ENCODE measurements at regions of chr7 and their contacts with region 1.

Region 1: DNA sequence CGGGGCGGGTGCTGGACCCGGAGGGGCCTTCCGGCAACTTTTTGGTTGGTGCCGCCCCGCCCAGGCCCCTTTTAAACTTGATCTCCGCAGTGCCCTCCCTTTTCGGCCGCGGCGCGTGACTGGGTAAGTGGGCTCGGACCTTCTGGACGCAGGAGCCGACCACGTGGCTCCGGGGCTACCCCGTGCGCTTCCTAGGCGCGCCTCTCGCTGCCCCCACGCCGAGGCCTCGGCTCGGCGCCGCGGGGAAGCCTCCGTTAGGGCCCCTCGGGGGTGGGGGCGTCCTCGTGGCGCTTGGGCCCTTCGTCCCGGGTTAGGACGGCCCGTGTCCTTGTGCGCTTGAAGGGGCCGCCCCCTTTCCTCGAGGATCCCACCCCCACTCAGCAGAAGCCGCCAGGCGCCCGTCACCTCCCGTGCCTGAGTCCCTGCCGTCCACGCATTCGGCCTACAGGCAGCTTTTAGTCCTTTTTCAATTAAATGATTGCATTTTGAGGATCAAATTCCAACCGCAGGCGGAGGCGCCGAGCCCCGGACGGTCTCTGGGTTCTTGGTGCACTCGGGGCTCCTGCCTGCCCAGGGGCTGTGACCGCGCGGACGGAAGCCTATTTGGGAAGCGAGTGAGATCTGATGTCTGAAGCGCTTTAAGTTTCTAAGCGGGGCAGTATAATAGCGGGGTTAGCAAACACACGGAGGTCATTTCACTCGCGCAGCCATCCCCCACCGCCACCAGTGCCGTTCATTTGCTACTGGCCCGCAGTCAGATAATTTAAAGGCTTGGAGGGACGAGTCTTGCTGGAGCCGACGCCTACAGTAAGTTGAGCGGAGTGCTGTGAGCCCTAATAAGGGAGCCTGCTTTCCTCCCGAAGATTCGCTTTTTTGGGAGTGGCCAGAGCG is 31.8 kb upstream of the TOMM7 start:
- DNase-seq: peak; percentile 89
- ATAC-seq: peak; percentile 74
- H3K4me3 Mint-ChIP-seq: peak overlapping the region; percentile 92
- H3K27ac Mint-ChIP-seq: peak overlapping the region; percentile 92
- H3K4me1 Mint-ChIP-seq: peaks cover 34% of the 10 kb centered on the region
- H3K27me3 Mint-ChIP-seq: peaks cover 2% of the 10 kb centered on the region

Region 2: GRCh38 chr7:22822486-22823141 is 31.8 kb before region 1 on chr7 and contains the start of gene TOMM7:
- CTCF ChIA-PET with region 1: interaction called, 4 read pairs
- POLR2A ChIA-PET with region 1: no interaction called
- intact Hi-C with region 1: loop called (anchors 1 to 2 kb)
- DNase-seq: peak; percentile 92
- ATAC-seq: peak; percentile 81
- H3K4me3 Mint-ChIP-seq: peak within 1 kb of the TSS; percentile 98
- H3K27ac Mint-ChIP-seq: peak within 1 kb of the TSS; percentile 93
- H3K4me1 Mint-ChIP-seq: peaks cover 35% of the 10 kb centered on the region
- H3K27me3 Mint-ChIP-seq: peaks cover 6% of the 10 kb centered on the region
- total RNA-seq, gene TOMM7: 73.7 to 254 TPM

Region 3: DNA sequence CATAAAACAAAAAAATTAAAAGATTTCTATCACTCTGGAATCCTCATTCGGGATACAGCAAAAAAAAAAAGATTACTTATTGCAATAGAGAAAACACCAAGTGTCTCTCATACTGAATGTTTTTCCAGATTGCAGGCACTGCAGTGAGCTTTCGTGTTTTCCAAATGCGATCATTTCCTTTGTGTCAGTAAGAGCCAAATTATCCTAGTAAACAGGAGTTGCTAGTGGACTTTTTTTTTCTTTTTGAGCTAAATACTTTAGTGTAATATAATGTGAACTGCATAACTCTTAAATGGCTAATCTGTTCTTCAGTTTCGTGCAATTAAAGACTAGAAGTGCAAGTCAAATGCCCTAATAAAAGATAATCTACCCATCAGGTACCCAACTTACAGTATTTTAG is 12.6 kb after region 1 on chr7:
- CTCF ChIA-PET with region 1: interaction called, 10 read pairs
- POLR2A ChIA-PET with region 1: no interaction called
- intact Hi-C with region 1: no loop called
- DNase-seq: no peak
- ATAC-seq: no peak
- H3K4me3 Mint-ChIP-seq: no peak overlapping the region
- H3K27ac Mint-ChIP-seq: no peak overlapping the region
- H3K4me1 Mint-ChIP-seq: peaks cover 9% of the 10 kb centered on the region
- H3K27me3 Mint-ChIP-seq: no peaks in the 10 kb centered on the region

Region 4: GRCh38 chr7:23742051-23742450 is 887.6 kb after region 1 on chr7:
- CTCF ChIA-PET with region 1: no interaction called
- POLR2A ChIA-PET with region 1: no interaction called
- intact Hi-C with region 1: no loop called
- DNase-seq: no peak
- ATAC-seq: no peak
- H3K4me3 Mint-ChIP-seq: no peak overlapping the region
- H3K27ac Mint-ChIP-seq: no peak overlapping the region
- H3K4me1 Mint-ChIP-seq: no peaks in the 10 kb centered on the region
- H3K27me3 Mint-ChIP-seq: no peaks in the 10 kb centered on the region